Gastrocnemius medialis (tissue), 4 donors: ENCODE measurements at regions of chr20 and their contacts with region 1.

Region 1: DNA sequence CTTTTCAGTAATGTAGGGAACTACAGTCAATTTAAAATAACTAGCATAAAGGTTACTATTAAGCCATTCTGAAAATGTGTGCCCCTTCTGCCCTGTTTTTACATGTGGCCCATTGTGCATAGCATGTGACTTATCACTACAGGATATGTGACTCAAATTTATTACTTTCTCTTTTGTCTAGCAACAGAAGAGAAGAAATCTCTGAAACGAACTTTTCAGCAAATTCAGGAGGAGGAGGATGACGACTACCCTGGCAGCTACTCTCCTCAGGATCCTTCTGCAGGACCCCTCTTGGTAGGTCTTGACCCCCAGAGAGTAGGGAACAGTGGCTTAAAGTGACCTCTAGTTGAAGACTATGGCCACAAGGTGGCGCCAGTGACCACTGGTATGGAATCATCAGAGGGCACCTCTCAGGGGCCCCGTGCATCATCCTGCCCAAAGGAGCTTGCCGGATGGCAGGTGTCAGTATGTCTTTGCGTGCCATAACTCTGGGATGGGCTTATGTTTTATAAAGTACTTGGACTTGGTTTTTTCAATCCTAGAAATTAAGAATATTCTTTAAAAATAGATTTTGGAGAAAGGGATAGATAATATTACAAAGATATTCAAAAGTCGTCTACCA is 23.9 kb downstream of the RPRD1B start:
- DNase-seq: peak; percentile 59 to 73
- ATAC-seq: peak; percentile 67 to 90
- H3K4me3 ChIP-seq: no peak overlapping the region
- H3K27ac ChIP-seq: peak overlapping the region in 3 of 4 donors; percentile 8 to 42 (median 14)
- H3K4me1 ChIP-seq: peaks cover 26 to 28% of the 10 kb centered on the region in 2 donors
- H3K27me3 ChIP-seq: no peaks in the 10 kb centered on the region
- CTCF ChIP-seq: peak; percentile 85 to 94 (median 88)
- POLR2A ChIP-seq: no peak

Region 2: GRCh38 chr20:37564388-37565133 is 492.9 kb before region 1 on chr20:
- in situ Hi-C with region 1: no loop called
- intact Hi-C with region 1: loop called (anchors 5 kb)
- DNase-seq: no peak
- ATAC-seq: peak in 1 of 2 donors; percentile 78
- H3K4me3 ChIP-seq: peak overlapping the region in 1 of 4 donors; percentile 28
- H3K27ac ChIP-seq: no peak overlapping the region
- H3K4me1 ChIP-seq: peaks cover 0 to 10% of the 10 kb centered on the region in 2 donors
- H3K27me3 ChIP-seq: peaks cover 16 to 23% (median 16%) of the 10 kb centered on the region in 3 donors
- CTCF ChIP-seq: peak; percentile 78 to 91 (median 87)
- POLR2A ChIP-seq: no peak

Region 3: GRCh38 chr20:38304845-38305447 is 247.5 kb after region 1 on chr20:
- in situ Hi-C with region 1: no loop called
- intact Hi-C with region 1: loop called (anchors 10 kb)
- DNase-seq: peak in 1 of 2 donors; percentile 52
- ATAC-seq: peak in 1 of 2 donors; percentile 85
- H3K4me3 ChIP-seq: no peak overlapping the region
- H3K27ac ChIP-seq: no peak overlapping the region
- H3K4me1 ChIP-seq: no peaks in the 10 kb centered on the region
- H3K27me3 ChIP-seq: no peaks in the 10 kb centered on the region
- CTCF ChIP-seq: peak; percentile 40 to 67 (median 45)
- POLR2A ChIP-seq: no peak

Region 4: GRCh38 chr20:38321959-38322598 is 264.6 kb after region 1 on chr20:
- in situ Hi-C with region 1: loop called in 1 of 4 experiments (anchors 25 kb)
- intact Hi-C with region 1: loop called (anchors 5 kb)
- DNase-seq: peak in 1 of 2 donors; percentile 12
- ATAC-seq: peak in 1 of 2 donors; percentile 39
- H3K4me3 ChIP-seq: no peak overlapping the region
- H3K27ac ChIP-seq: no peak overlapping the region
- H3K4me1 ChIP-seq: no peaks in the 10 kb centered on the region
- H3K27me3 ChIP-seq: no peaks in the 10 kb centered on the region
- CTCF ChIP-seq: peak; percentile 43 to 60 (median 55)
- POLR2A ChIP-seq: no peak

Region 5: DNA sequence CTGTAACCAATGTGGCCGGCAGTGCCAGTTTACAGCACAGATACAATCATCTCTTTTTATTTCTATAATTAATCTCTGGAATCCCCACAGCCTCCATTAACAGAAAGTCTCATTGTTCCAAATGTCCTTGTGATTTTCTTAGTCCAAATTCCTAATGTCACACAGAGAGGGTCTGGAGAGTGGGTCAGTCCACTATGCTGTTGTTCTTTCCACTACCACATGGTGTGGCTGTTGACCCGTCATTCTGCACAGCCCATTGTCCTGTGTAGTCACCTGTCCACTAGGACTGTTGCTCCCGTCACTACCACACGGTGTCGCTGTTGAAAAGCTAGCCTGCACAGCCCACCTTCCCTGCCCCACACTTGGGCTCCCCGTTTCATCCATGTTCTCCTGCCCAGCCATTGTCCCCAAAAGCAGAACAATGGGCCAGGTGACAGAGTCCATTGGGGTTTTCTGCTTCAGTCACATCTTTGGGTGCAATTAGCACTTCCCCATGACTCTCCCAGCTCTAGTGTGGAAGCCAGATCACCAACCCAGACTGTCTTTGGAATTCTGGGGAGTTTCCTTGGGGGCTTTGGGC is 280.2 kb after region 1 on chr20:
- in situ Hi-C with region 1: loop called in 1 of 4 experiments (anchors 25 kb)
- intact Hi-C with region 1: no loop called
- DNase-seq: no peak
- ATAC-seq: no peak
- H3K4me3 ChIP-seq: no peak overlapping the region
- H3K27ac ChIP-seq: no peak overlapping the region
- H3K4me1 ChIP-seq: no peaks in the 10 kb centered on the region
- H3K27me3 ChIP-seq: no peaks in the 10 kb centered on the region
- CTCF ChIP-seq: peak in 3 of 5 experiments; percentile 20 to 51 (median 22)
- POLR2A ChIP-seq: no peak